ENCODE measurements at regions of chr7 and their contacts with region 1.

Region 1: GRCh38 chr7:106485031-106485551 is 175.9 kb downstream of the CCDC71L start:
- DNase-seq: no peak
- H3K4me3 Mint-ChIP-seq: no peak overlapping the region
- H3K27ac Mint-ChIP-seq: peak overlapping the region; percentile 69
- H3K4me1 Mint-ChIP-seq: peaks cover 53% of the 10 kb centered on the region
- H3K27me3 Mint-ChIP-seq: no peaks in the 10 kb centered on the region

Region 2: GRCh38 chr7:106257752-106258151 is 227.3 kb before region 1 on chr7:
- intact Hi-C with region 1: loop called (anchors 1 kb)
- DNase-seq: no peak
- H3K4me3 Mint-ChIP-seq: no peak overlapping the region
- H3K27ac Mint-ChIP-seq: peak overlapping the region; percentile 25
- H3K4me1 Mint-ChIP-seq: peaks cover 63% of the 10 kb centered on the region
- H3K27me3 Mint-ChIP-seq: no peaks in the 10 kb centered on the region

Region 3: DNA sequence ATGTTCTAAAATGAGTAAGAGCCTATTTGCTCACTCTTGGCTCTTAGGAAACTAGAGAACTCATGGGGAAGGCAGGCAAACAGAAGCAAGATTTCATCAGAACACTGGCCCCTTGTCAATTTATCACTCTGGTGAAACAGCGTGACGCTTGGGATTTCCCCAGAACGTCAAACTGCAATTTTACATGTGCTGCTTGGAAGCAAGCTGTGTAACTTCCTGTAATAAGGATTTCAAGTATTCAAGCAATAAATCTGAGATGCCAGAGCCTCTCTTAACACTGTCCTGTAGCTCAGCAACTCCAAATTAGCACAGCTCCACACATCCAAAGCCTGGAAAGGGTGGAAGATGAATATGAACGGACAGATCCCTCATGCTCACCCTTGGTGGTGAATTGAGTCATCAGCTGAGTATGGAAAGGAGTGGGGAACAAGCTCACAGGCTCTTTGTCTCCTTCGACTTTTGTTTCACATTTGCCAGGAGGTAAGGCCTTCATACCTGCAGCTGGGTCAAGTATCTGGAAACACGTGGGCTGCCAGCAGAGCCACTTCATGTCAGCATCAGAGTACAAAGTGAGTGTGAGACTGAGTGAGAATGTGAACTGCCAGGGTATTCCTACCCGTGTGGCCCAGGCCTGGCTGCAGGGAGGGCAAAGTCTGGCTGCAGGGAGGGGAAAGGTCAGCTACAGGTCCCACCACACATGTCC is 59.9 kb before region 1 on chr7:
- intact Hi-C with region 1: loop called (anchors 1 kb)
- DNase-seq: peak; percentile 44
- H3K4me3 Mint-ChIP-seq: peak overlapping the region; percentile 65
- H3K27ac Mint-ChIP-seq: peak overlapping the region; percentile 98
- H3K4me1 Mint-ChIP-seq: peaks cover 75% of the 10 kb centered on the region
- H3K27me3 Mint-ChIP-seq: no peaks in the 10 kb centered on the region

Region 4: GRCh38 chr7:106542550-106543220 is 57.6 kb after region 1 on chr7:
- intact Hi-C with region 1: loop called (anchors 1 kb)
- DNase-seq: peak; percentile 33
- H3K4me3 Mint-ChIP-seq: no peak overlapping the region
- H3K27ac Mint-ChIP-seq: no peak overlapping the region
- H3K4me1 Mint-ChIP-seq: peaks cover 16% of the 10 kb centered on the region
- H3K27me3 Mint-ChIP-seq: no peaks in the 10 kb centered on the region

Region 5: GRCh38 chr7:106717955-106718871 is 233.1 kb after region 1 on chr7:
- intact Hi-C with region 1: loop called (anchors 2 kb)
- DNase-seq: peak; percentile 56
- H3K4me3 Mint-ChIP-seq: no peak overlapping the region
- H3K27ac Mint-ChIP-seq: no peak overlapping the region
- H3K4me1 Mint-ChIP-seq: peaks cover 30% of the 10 kb centered on the region
- H3K27me3 Mint-ChIP-seq: no peaks in the 10 kb centered on the region

Region 6: GRCh38 chr7:106870983-106871410 is 385.9 kb after region 1 on chr7:
- intact Hi-C with region 1: loop called (anchors 2 kb)
- DNase-seq: no peak
- H3K4me3 Mint-ChIP-seq: peak overlapping the region; percentile 37
- H3K27ac Mint-ChIP-seq: peak overlapping the region; percentile 64
- H3K4me1 Mint-ChIP-seq: peaks cover 63% of the 10 kb centered on the region
- H3K27me3 Mint-ChIP-seq: no peaks in the 10 kb centered on the region

Measured in activated T-helper 2 cell treated with anti-CD3 and anti-CD28 coated beads, Interferon-gamma antibody, Interleukin-2, Interleukin-4, amounts not matched to agents 10 μg/mL and 5 μg/mL and 100 μg/mL, durations not matched to agents 14 hours and 24 hours and 36 hours (primary cell).